Cardiac septum (tissue), 1 donor: ENCODE measurements at regions of chr16 and their contacts with region 1.

Region 1: DNA sequence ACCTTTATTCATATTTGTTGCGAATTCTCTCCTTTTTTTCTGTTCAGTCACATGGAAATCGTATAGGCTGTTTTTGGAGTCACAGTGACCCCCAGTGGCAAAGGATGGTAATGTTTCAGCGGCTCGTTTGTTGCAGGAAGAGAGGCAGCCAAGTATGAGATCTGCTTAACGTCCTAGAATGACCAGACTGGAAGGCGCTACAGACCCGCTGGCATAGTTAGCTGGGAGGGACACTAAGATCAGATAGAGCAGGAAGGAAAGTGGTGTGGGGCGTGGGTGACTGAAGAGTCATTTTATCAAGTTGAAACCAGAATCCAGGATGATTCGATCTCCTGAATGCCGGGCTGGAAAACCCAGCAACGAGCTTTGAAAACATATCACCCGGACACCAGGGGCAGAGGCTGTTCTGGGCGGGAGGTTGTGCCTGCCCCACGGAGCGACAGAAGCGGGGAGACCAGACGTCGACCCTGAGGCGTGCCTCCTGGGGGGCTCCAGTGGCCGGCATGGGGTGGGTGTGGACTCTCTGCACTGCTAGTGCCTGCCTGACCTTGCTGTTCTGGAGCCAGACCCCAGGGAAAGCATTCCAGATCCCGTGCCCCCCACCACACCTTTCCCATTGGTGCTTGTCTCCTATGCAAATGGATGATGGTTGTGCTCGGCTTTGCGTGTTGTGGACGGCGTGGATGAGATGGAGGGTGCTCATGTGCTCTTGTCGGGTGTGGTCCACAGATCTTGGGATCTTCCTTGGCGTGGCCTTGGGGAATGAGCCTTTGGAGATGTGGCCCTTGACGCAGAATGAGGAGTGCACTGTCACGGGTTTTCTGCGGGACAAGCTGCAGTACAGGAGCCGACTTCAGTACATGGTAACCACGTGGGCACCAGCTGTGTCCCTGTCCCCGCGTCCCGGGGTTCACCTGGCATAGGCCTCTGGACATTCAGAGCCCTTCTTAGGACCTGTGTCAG is 7.7 kb downstream of the IL34 start:
- DNase-seq: peak; percentile 87

Region 2: GRCh38 chr16:70331588-70332358 is 322.3 kb before region 1 on chr16:
- intact Hi-C with region 1: loop called (anchors 10 kb)
- DNase-seq: no peak

Region 3: GRCh38 chr16:70375636-70376611 is 278.2 kb before region 1 on chr16:
- intact Hi-C with region 1: loop called (anchors 10 kb)
- DNase-seq: no peak

Region 4: DNA sequence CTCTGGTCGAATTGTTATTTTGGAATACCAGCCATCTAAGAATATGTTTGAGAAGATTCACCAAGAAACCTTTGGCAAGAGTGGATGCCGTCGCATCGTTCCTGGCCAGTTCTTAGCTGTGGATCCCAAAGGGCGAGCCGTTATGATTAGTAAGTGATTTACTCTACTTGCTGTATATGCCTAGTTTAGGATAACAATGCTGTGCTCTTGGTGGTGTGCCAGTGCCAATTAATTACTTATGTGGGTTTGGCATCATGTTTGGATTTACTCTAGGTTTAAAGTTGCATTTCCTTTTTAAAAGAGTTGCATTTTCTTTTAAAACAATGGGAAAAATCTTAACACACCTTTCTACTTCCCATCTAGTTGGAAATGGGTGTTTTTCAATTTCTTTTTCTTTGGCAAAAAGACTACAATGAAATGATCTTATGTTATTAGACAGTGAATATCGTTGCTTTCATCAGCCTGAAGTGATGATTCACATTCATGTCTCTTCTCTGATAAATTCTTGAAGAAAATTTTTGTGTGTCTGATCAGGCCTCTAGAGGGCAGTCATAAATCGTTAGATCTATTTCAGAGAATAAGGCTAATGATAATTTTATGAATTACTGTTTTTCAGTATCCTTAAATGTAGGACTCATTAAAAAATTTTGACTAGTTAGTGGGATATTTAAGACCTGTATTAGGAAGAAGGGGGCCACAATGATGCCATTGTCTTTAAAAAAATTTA is 124.9 kb before region 1 on chr16:
- intact Hi-C with region 1: loop called (anchors 2 kb)
- DNase-seq: no peak

Region 5: DNA sequence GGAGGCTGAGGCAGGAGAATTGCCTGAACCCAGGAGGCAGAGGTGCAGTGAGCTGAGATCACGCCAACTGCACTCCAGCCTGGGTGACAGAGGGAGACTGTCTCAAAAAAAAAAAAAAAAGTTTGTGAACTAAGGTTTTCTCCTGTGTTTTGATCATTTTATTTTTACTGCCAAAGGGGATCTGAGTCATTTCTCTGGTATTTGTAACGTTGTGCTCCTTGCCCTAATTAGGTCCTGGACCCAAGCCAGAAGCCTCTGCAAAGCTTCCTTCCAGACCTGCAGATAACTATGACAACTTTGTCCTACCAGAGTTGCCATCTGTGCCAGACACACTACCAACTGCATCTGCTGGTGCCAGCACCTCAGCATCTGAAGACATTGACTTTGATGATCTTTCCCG is 1273.3 kb after region 1 on chr16:
- intact Hi-C with region 1: no loop called
- DNase-seq: no peak